ENCODE measurements at regions of chr6 and their contacts with region 1.

Region 1: DNA sequence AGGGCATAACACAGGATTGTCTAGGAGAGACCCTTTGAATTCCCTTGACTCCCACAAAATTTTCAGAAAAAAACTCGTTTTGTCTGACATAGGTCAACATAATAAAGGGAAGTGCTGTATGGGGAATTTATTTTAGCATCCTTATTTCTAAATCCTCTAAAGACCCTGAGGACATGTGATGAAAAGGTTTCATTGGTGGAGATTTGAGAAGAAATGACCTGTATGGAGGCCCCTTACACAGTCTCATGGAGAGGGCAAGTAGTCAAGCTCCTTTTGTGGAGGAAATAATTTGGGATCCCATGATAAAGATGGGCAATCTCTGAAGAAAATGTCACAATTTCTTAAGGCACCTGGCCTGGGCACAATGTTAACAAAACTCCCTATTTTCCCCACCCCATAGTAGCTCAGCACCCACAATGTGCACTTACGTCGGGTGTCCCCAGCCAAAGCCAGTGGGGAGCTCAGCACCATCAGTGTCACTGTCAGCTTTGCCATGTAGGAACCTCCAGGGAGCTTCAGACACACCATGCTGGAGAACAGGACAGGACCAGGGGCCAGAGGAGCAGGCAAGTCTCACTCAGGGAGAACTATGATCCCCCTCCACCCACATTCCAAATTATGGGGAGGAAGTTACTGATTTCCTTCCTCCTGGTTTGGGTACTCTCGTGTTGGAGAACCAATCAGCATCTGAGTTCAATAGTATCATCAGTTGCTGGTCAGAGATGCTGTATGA is at the start of gene HLA-DRB5:
- DNase-seq: no peak
- ATAC-seq: no peak
- H3K4me3 ChIP-seq: no peak within 1 kb of the TSS
- H3K27ac ChIP-seq: no peak within 1 kb of the TSS
- H3K4me1 ChIP-seq: no peaks in the 10 kb centered on the region
- H3K27me3 ChIP-seq: no peaks in the 10 kb centered on the region
- CTCF ChIP-seq: no peak
- EP300 ChIP-seq: no peak
- POLR2A ChIP-seq: no peak
- RAD21 ChIP-seq: no peak
- polyA plus RNA-seq, gene HLA-DRB5: not detected

Region 2: GRCh38 chr6:32439602-32440214 is 90.2 kb before region 1 on chr6 and contains the start of gene HLA-DRA:
- CTCF ChIA-PET with region 1: no interaction called
- POLR2A ChIA-PET with region 1: no interaction called
- in situ Hi-C with region 1: no loop called
- intact Hi-C with region 1: no loop called
- DNase-seq: peak; percentile 59 to 78 (median 66)
- ATAC-seq: peak; percentile 84
- H3K4me3 ChIP-seq: no peak within 1 kb of the TSS
- H3K27ac ChIP-seq: no peak within 1 kb of the TSS
- H3K4me1 ChIP-seq: no peaks in the 10 kb centered on the region
- H3K27me3 ChIP-seq: peaks cover 0 to 2% of the 10 kb centered on the region in 2 experiments; a peak in 2 of 5 replicates
- CTCF ChIP-seq: no peak
- EP300 ChIP-seq: no peak
- POLR2A ChIP-seq: no peak
- RAD21 ChIP-seq: no peak
- polyA plus RNA-seq, gene HLA-DRA: 0.18 to 0.31 TPM

Region 3: DNA sequence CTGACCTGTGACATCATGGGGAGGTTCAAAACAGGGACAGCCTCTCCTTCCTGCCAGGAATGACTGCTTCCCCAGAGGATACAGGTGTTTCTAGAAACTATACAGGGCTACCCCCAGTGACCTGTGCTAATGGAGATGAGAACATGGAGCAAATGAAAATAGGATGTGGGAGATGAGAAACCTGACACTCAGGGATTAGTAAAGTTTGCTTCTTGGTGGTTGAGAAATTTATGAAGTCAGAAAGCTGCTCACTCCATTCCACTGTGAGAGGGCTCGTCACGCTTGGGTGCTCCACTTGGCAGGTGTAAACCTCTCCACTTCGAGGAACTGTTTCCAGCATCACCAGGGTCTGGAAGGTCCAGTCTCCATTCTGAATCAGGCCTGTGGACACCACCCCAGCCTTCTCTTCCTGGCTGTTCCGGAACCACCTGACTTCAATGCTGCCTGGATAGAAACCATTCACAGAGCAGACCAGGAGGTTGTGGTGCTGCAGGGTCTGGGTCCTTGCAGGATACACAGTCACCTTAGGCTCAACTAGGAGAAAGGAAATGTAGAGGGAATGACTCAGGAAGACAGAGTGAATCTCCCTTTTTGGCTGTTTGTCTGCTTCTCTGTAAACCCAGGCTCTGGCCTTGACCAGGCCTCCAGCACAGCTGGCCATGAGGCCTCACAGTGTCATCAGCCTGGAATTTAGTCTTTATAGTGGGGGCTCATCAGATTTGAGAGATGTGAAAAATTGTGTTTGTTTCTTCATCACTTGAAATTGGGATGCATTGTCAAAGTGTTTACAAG is 10.5 kb before region 1 on chr6:
- CTCF ChIA-PET with region 1: no interaction called
- POLR2A ChIA-PET with region 1: no interaction called
- in situ Hi-C with region 1: no loop called
- intact Hi-C with region 1: no loop called
- DNase-seq: no peak
- ATAC-seq: no peak
- H3K4me3 ChIP-seq: no peak overlapping the region
- H3K27ac ChIP-seq: no peak overlapping the region
- H3K4me1 ChIP-seq: no peaks in the 10 kb centered on the region
- H3K27me3 ChIP-seq: no peaks in the 10 kb centered on the region
- CTCF ChIP-seq: no peak
- EP300 ChIP-seq: no peak
- POLR2A ChIP-seq: no peak
- RAD21 ChIP-seq: no peak

Region 4: DNA sequence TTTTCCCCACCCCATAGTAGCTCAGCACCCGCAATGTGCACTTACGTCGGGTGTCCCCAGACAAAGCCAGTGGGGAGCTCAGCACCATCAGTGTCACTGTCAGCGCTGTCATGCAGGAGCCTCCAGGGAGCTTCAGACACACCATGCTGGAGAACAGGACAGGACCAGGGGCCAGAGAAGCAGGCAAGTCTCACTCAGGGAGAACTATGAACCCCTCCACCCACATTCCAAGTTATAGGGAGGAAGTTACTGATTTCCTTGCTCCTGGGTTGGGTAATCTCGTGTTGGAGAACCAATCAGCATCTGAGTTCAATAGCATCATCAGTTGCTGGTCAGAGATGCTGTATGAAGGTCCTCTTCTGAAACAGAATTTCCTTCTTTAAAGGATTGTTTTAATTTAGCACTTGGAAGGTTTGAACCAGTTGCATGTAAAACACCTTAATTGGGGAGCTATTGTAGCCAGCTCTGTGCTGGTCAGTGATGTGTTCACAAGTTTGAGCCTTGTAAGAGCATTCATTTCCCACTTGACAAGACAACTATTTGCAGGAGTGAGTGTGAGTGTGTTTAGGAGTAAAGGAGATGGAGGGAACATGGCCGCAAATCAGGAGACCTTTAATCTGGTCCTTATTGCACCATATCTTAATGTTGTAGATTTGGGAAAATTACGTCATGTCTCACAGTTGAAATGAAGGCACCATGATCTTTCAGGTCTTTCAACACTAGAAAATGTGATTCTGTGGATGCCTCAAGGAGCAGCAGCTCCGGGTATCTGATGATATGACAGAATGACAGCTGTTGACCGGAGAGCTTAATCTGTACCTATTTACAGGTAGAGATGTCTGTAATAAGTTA is 60.0 kb after region 1 on chr6 and contains the start of gene HLA-DRB1:
- CTCF ChIA-PET with region 1: no interaction called
- POLR2A ChIA-PET with region 1: interaction called, 3 read pairs
- in situ Hi-C with region 1: loop called (anchors 5 kb)
- intact Hi-C with region 1: no loop called
- DNase-seq: no peak
- ATAC-seq: peak; percentile 94
- H3K4me3 ChIP-seq: no peak within 1 kb of the TSS
- H3K27ac ChIP-seq: no peak within 1 kb of the TSS
- H3K4me1 ChIP-seq: no peaks in the 10 kb centered on the region
- H3K27me3 ChIP-seq: no peaks in the 10 kb centered on the region
- CTCF ChIP-seq: no peak
- EP300 ChIP-seq: no peak
- POLR2A ChIP-seq: no peak
- RAD21 ChIP-seq: no peak
- polyA plus RNA-seq, gene HLA-DRB1: 0.06 TPM in 1 of 2 experiments, not detected in the other

Measured in K562 (cell line).